Colonic mucosa (tissue), 4 donors: ENCODE measurements at regions of chr5 and their contacts with region 1.

Region 1: GRCh38 chr5:74640450-74640953 is at the start of gene ENC1:
- DNase-seq: peak; percentile 84
- H3K4me3 ChIP-seq: peak within 1 kb of the TSS; percentile 72
- H3K27ac ChIP-seq: peak within 1 kb of the TSS; percentile 94
- H3K4me1 ChIP-seq: peaks cover 9% of the 10 kb centered on the region
- H3K27me3 ChIP-seq: no peaks in the 10 kb centered on the region
- CTCF ChIP-seq: no peak
- total RNA-seq, gene ENC1: 18.9 to 26.6 TPM

Region 2: DNA sequence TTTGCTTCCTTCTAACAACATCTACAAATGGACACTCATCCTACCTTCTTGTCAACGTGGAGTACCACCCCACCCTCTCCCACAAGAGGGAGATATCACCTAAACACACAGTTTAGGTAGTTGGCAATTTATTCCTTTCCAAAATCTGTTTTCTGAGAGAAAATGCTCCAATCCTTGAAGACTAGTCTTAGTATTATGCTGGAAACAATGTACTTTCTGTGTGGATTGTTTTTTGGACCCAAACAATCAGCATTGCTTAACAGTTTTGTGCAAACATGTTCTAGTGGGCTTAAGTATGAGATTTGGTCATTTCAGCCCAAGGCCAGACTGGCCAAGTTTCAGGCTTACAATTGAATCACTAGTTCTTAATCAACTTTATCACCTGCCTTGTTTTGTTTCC is 655.4 kb before region 1 on chr5:
- intact Hi-C with region 1: loop called (anchors 10 kb)
- DNase-seq: no peak
- H3K4me3 ChIP-seq: no peak overlapping the region
- H3K27ac ChIP-seq: no peak overlapping the region
- H3K4me1 ChIP-seq: no peaks in the 10 kb centered on the region
- H3K27me3 ChIP-seq: no peaks in the 10 kb centered on the region
- CTCF ChIP-seq: no peak

Region 3: GRCh38 chr5:74035521-74035981 is 605.0 kb before region 1 on chr5:
- intact Hi-C with region 1: loop called (anchors 5 kb)
- DNase-seq: peak; percentile 25
- H3K4me3 ChIP-seq: no peak overlapping the region
- H3K27ac ChIP-seq: no peak overlapping the region
- H3K4me1 ChIP-seq: no peaks in the 10 kb centered on the region
- H3K27me3 ChIP-seq: no peaks in the 10 kb centered on the region
- CTCF ChIP-seq: peak; percentile 17

Region 4: DNA sequence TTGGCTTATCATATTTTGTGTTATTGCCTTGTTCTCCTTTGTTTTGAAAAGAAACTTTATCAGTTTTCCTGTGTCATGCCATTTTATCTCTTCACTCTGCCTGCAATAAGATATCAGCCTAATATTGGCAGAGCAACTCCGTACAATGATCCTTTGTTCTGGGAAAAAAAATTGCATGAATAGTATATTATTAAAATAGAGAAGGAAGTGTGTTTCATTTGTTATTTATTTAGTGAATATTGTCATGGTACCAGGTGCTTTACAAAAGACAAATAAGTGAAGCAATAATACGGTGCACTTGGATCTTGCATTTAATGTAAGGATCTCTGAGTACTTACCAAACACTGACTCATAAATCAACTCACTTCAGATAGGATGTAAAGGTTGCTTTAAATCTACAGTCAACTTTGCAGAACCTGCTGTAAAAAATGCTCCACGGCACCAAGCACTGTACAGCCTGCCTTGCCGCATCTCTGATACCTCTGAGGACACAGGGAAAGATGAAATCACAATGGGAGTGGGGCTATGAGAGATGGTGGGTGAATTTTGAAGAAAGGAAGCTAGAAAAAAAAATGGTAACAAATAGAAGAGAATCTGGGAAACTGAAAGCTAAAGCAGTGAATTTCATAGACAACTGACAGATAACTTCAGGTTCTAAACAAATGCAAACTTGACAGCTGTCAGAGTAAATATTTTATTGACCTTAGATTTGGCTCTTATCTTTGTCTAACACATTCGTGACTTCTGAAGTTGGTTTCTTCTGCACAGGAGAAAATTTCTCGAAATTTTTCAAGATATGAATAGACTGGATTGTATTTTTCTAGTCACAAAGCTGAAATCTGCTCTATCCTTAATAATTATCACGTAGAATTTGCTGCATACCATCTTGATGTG is 232.1 kb before region 1 on chr5:
- intact Hi-C with region 1: loop called (anchors 10 kb)
- DNase-seq: no peak
- H3K4me3 ChIP-seq: no peak overlapping the region
- H3K27ac ChIP-seq: no peak overlapping the region
- H3K4me1 ChIP-seq: no peaks in the 10 kb centered on the region
- H3K27me3 ChIP-seq: no peaks in the 10 kb centered on the region
- CTCF ChIP-seq: no peak

Region 5: GRCh38 chr5:74587890-74588289 is 52.6 kb before region 1 on chr5:
- intact Hi-C with region 1: loop called (anchors 5 kb)
- DNase-seq: no peak
- H3K4me3 ChIP-seq: no peak overlapping the region
- H3K27ac ChIP-seq: peak overlapping the region; percentile 83
- H3K4me1 ChIP-seq: no peaks in the 10 kb centered on the region
- H3K27me3 ChIP-seq: no peaks in the 10 kb centered on the region
- CTCF ChIP-seq: no peak